ENCODE measurements at regions of chr1 and their contacts with region 1.

Region 1: DNA sequence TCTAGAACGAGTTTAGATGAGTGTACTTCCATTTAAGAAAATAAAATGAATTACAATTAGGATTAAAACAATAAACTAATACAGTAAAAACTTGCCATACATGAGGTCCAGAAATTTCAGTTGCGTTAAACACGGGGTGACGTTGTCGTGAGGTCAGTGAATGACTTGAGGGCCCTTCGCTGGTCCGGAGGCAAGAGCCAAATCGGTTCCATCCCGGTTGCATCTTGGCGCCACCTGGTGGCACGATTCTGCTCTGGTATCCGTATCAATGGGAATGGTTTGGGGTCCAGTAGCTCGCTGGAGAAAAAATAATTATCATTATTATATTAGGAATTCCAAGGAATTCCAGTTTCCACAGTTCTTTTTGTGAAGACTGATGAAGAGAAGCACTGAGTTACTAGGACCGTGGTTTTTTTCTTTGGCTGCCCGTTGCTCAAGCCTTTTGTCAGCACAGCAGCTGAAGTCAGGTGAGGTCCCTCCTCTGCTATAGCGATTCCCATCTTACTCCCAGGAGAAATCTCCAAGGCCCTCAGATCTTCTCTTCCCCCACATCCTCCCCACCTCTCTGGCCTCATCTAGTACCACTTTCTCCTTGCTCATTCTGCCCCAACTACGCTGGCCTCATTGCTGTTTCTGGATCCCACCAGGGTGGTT is 161.4 kb downstream of the SLC35F3 start:
- DNase-seq: peak; percentile 79 to 85 (median 80)
- ATAC-seq: peak; percentile 99
- H3K4me3 ChIP-seq: no peak overlapping the region
- H3K27ac ChIP-seq: no peak overlapping the region
- H3K4me1 ChIP-seq: no peaks in the 10 kb centered on the region
- H3K27me3 ChIP-seq: no peaks in the 10 kb centered on the region; a peak in 1 of 5 replicates
- CTCF ChIP-seq: peak; percentile 87 to 88 (median 87)
- EP300 ChIP-seq: no peak
- POLR2A ChIP-seq: no peak
- RAD21 ChIP-seq: peak; percentile 90 to 93

Region 2: DNA sequence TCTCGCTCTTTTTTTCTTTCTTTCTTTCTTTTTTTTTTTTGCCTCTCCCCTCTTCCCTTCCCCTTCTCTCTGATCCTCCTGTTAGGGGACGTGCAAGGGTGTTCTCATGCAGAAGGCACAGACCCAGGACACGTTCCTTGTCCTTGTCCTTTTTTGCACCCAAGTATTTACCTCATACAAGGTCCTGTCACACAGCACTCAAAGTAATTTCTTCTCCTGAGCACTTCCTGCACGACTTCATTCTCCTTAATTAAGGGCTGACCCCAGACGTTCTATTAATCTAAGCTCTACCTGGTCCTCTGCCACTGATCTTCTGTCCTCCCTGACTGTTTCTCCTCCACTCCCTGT is 770.0 kb before region 1 on chr1:
- CTCF ChIA-PET with region 1: no interaction called
- POLR2A ChIA-PET with region 1: no interaction called
- in situ Hi-C with region 1: no loop called
- intact Hi-C with region 1: loop called (anchors 2 kb)
- DNase-seq: no peak
- ATAC-seq: no peak
- H3K4me3 ChIP-seq: no peak overlapping the region
- H3K27ac ChIP-seq: no peak overlapping the region
- H3K4me1 ChIP-seq: peaks cover 0 to 6% of the 10 kb centered on the region in 2 experiments; a peak in 1 of 5 replicates
- H3K27me3 ChIP-seq: peaks cover 3 to 11% of the 10 kb centered on the region in 2 experiments; a peak in 3 of 5 replicates
- CTCF ChIP-seq: no peak
- EP300 ChIP-seq: no peak
- POLR2A ChIP-seq: no peak
- RAD21 ChIP-seq: no peak

Region 3: DNA sequence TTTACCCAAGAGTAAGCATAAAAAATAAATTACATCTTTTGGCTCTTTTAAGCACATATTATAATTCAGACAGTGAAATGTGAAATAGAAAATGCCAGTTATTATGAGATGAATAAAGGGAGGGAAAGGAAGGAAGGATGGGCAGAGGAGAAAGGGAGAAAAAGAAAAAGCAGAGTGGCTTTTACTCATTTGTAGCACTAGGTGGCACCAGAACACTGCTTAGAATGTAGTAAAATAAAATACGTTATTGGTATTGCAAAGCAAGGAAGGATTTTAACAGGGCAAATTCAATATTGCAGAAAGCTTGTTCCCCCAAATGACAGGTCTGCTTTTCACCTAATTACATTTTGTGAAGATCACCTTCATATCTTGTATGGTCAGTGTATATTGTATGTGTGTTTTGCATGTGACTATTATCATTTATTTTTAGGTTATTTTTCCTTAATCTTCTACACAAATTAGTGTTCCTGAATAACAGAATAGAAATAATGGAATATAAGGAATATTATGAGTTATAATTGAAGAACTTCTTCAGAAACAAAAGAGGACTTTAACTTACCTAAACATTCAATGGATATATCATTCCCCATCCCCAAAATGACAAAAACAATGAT is 761.3 kb before region 1 on chr1:
- CTCF ChIA-PET with region 1: interaction called, 12 read pairs
- POLR2A ChIA-PET with region 1: no interaction called
- in situ Hi-C with region 1: no loop called
- intact Hi-C with region 1: loop called (anchors 1 kb)
- DNase-seq: peak; percentile 20 to 29 (median 26)
- ATAC-seq: peak; percentile 69
- H3K4me3 ChIP-seq: no peak overlapping the region
- H3K27ac ChIP-seq: no peak overlapping the region
- H3K4me1 ChIP-seq: no peaks in the 10 kb centered on the region
- H3K27me3 ChIP-seq: no peaks in the 10 kb centered on the region
- CTCF ChIP-seq: peak; percentile 45 to 82 (median 68); a peak in 5 of 6 replicates
- EP300 ChIP-seq: no peak
- POLR2A ChIP-seq: no peak
- RAD21 ChIP-seq: peak; percentile 74 to 85

Region 4: GRCh38 chr1:233364695-233365539 is 701.0 kb before region 1 on chr1:
- CTCF ChIA-PET with region 1: interaction called, 8 read pairs
- POLR2A ChIA-PET with region 1: no interaction called
- in situ Hi-C with region 1: no loop called
- intact Hi-C with region 1: loop called (anchors 1 kb)
- DNase-seq: peak in 2 of 4 experiments; percentile 35 to 40
- ATAC-seq: 0 out of 3 replicates have a peak, but pooled peaks have one; percentile 46
- H3K4me3 ChIP-seq: no peak overlapping the region
- H3K27ac ChIP-seq: no peak overlapping the region
- H3K4me1 ChIP-seq: no peaks in the 10 kb centered on the region
- H3K27me3 ChIP-seq: peaks cover 9 to 15% of the 10 kb centered on the region in 2 experiments; a peak in 3 of 5 replicates
- CTCF ChIP-seq: peak; percentile 40 to 74 (median 50); a peak in 4 of 6 replicates
- EP300 ChIP-seq: no peak
- POLR2A ChIP-seq: no peak
- RAD21 ChIP-seq: peak; percentile 69 to 73

Region 5: GRCh38 chr1:233394860-233395717 is 670.8 kb before region 1 on chr1:
- CTCF ChIA-PET with region 1: interaction called, 15 read pairs
- POLR2A ChIA-PET with region 1: no interaction called
- in situ Hi-C with region 1: loop called (anchors 25 kb)
- intact Hi-C with region 1: loop called (anchors 1 kb)
- DNase-seq: peak; percentile 47 to 65 (median 52)
- ATAC-seq: peak; percentile 98
- H3K4me3 ChIP-seq: no peak overlapping the region
- H3K27ac ChIP-seq: no peak overlapping the region
- H3K4me1 ChIP-seq: no peaks in the 10 kb centered on the region; a peak in 1 of 5 replicates
- H3K27me3 ChIP-seq: no peaks in the 10 kb centered on the region
- CTCF ChIP-seq: peak; percentile 80 to 91 (median 83)
- EP300 ChIP-seq: no peak
- POLR2A ChIP-seq: no peak
- RAD21 ChIP-seq: peak; percentile 94 to 95

Region 6: GRCh38 chr1:233440951-233441401 is 624.9 kb before region 1 on chr1:
- CTCF ChIA-PET with region 1: interaction called, 7 read pairs
- POLR2A ChIA-PET with region 1: no interaction called
- in situ Hi-C with region 1: loop called (anchors 10 kb)
- intact Hi-C with region 1: loop called (anchors 1 kb)
- DNase-seq: peak; percentile 37 to 79 (median 52)
- ATAC-seq: peak; percentile 90
- H3K4me3 ChIP-seq: no peak overlapping the region
- H3K27ac ChIP-seq: no peak overlapping the region
- H3K4me1 ChIP-seq: peaks cover 0 to 4% of the 10 kb centered on the region in 2 experiments; a peak in 2 of 5 replicates
- H3K27me3 ChIP-seq: no peaks in the 10 kb centered on the region
- CTCF ChIP-seq: peak; percentile 78 to 95 (median 83)
- EP300 ChIP-seq: 0 out of 2 replicates have a peak, but pooled peaks have one; percentile 12
- POLR2A ChIP-seq: no peak
- RAD21 ChIP-seq: peak; percentile 91 to 95

Region 7: DNA sequence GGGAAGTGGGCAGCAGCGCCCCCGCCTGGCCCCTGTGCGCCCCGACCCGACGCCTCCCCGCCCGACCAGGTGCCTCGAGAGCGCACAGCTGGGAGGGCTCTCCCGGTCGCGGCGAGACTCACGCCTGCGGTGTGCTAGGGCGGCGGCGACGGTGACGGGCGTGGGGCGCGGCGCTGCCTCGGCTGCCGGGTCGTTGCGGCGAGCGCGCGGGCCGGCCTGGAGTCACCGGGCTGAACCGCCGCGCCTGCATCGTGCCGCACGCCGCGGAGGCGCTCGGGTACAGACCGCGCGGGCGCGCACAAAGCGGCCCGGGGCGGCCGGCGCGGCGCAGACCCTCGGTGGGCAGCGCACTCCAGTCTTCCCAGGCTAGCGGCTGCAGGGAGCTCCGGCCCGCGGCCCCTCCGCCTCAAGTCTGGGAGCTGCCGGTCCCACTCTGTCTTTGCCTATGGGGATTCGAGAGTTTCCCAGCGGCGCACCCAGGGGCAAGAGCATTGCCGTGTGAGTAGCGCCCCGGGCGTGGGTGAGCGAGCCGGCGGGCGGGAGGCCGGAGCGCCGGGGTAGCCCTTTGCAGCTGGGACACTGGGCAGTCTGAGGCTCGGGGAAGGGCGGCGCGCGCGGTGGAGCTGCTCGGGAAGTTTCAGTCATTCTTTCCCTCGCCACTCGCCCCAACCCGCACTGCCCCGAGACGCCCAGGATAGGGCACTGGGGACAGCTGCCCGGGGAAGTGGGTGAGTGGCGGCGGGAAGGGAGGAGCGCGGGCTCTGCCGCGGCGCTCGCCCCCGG is 161.1 kb before region 1 on chr1 and contains the start of gene SLC35F3:
- CTCF ChIA-PET with region 1: no interaction called
- POLR2A ChIA-PET with region 1: no interaction called
- in situ Hi-C with region 1: no loop called
- intact Hi-C with region 1: loop called (anchors 5 kb)
- DNase-seq: peak; percentile 58 to 81 (median 72)
- ATAC-seq: peak; percentile 100
- H3K4me3 ChIP-seq: peak within 1 kb of the TSS; percentile 23
- H3K27ac ChIP-seq: no peak within 1 kb of the TSS
- H3K4me1 ChIP-seq: peaks cover 0 to 16% of the 10 kb centered on the region in 2 experiments; a peak in 2 of 5 replicates
- H3K27me3 ChIP-seq: peaks cover 16 to 25% of the 10 kb centered on the region in 2 experiments
- CTCF ChIP-seq: peak; percentile 31 to 72 (median 52); a peak in 3 of 6 replicates
- EP300 ChIP-seq: no peak
- POLR2A ChIP-seq: no peak
- RAD21 ChIP-seq: peak; percentile 23 to 65; a peak in 1 of 4 replicates
- polyA plus RNA-seq, gene SLC35F3: not detected

Region 8: GRCh38 chr1:233993651-233994050 is 72.3 kb before region 1 on chr1:
- CTCF ChIA-PET with region 1: no interaction called
- POLR2A ChIA-PET with region 1: no interaction called
- in situ Hi-C with region 1: no loop called
- intact Hi-C with region 1: no loop called
- DNase-seq: no peak
- ATAC-seq: no peak
- H3K4me3 ChIP-seq: no peak overlapping the region
- H3K27ac ChIP-seq: no peak overlapping the region
- H3K4me1 ChIP-seq: no peaks in the 10 kb centered on the region
- H3K27me3 ChIP-seq: peaks cover 0 to 16% of the 10 kb centered on the region in 2 experiments; a peak in 1 of 5 replicates
- CTCF ChIP-seq: no peak
- EP300 ChIP-seq: no peak
- POLR2A ChIP-seq: no peak
- RAD21 ChIP-seq: no peak

Measured in K562 (cell line).